ENCODE measurements at regions of chr2 and their contacts with region 1.

Region 1: GRCh38 chr2:241173570-241173969 is 14.9 kb upstream of the ANO7 start:
- DNase-seq: no peak
- H3K4me3 ChIP-seq: no peak overlapping the region
- H3K27ac ChIP-seq: no peak overlapping the region
- H3K4me1 ChIP-seq: no peaks in the 10 kb centered on the region
- H3K27me3 ChIP-seq: no peaks in the 10 kb centered on the region
- CTCF ChIP-seq: no peak

Region 2: GRCh38 chr2:241208058-241208457 is 34.5 kb after region 1 on chr2:
- CTCF ChIA-PET with region 1: no interaction called
- dilution Hi-C with region 1: loop called (anchors 5 kb)
- in situ Hi-C with region 1: no loop called
- intact Hi-C with region 1: no loop called
- DNase-seq: no peak
- H3K4me3 ChIP-seq: no peak overlapping the region
- H3K27ac ChIP-seq: no peak overlapping the region
- H3K4me1 ChIP-seq: no peaks in the 10 kb centered on the region
- H3K27me3 ChIP-seq: no peaks in the 10 kb centered on the region
- CTCF ChIP-seq: no peak

Measured in mammary epithelial cell (primary cell).